MCF 10A (cell line): ENCODE measurements at regions of chr1 and their contacts with region 1.

Region 1: DNA sequence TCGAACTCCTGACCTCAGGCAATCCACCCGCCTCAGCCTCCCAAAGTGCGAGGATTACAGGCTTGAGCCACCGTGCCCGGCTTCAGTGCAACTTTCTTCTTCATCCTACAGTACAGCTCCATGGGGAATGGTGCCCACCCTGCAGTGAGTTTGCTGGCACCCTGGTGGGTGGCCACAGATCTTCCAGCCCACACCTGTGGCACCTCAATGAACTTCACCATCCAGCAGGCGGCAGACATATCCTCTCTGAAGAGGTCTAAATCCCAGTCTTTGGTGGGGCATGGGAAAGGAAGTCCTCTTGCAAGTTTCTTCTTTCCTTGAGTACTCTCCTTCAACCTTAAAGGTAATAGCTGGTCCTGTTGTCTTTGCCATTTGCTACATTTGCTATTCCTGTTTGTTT is 18.1 kb upstream of the ZBTB8A start:
- DNase-seq: no peak
- H3K4me3 Mint-ChIP-seq: peak overlapping the region; percentile 66
- H3K27ac Mint-ChIP-seq: no peak overlapping the region
- H3K4me1 Mint-ChIP-seq: peaks cover 5% of the 10 kb centered on the region
- H3K27me3 Mint-ChIP-seq: no peaks in the 10 kb centered on the region
- CTCF ChIP-seq: no peak

Region 2: GRCh38 chr1:32400876-32401631 is 120.1 kb before region 1 on chr1:
- CTCF ChIA-PET with region 1: interaction called, 16 read pairs
- POLR2A ChIA-PET with region 1: no interaction called
- intact Hi-C with region 1: no loop called
- DNase-seq: peak; percentile 90
- H3K4me3 Mint-ChIP-seq: no peak overlapping the region
- H3K27ac Mint-ChIP-seq: peak overlapping the region; percentile 67
- H3K4me1 Mint-ChIP-seq: peaks cover 6% of the 10 kb centered on the region
- H3K27me3 Mint-ChIP-seq: no peaks in the 10 kb centered on the region
- CTCF ChIP-seq: peak; percentile 86

Region 3: DNA sequence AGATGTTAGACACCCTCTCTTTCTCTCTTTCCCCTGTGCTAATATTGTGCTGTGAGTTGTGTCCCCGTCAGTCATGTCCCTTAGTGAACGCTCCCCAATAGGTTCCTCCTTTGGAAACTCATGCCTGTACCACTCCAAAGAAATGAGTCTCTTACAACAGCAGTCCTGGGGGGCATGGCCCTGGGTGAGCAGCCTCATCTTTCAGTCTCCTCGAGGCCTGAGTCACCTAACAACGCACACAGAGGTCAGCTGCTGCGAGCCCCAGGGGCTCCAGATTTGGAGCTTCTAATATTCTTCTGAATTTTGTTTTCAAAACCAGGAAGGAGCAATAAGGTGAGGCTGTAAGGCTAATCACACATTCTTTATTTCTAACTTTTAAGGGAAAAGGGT is 12.4 kb before region 1 on chr1:
- CTCF ChIA-PET with region 1: interaction called, 21 read pairs
- POLR2A ChIA-PET with region 1: no interaction called
- intact Hi-C with region 1: no loop called
- DNase-seq: no peak
- H3K4me3 Mint-ChIP-seq: no peak overlapping the region
- H3K27ac Mint-ChIP-seq: no peak overlapping the region
- H3K4me1 Mint-ChIP-seq: no peaks in the 10 kb centered on the region
- H3K27me3 Mint-ChIP-seq: no peaks in the 10 kb centered on the region
- CTCF ChIP-seq: no peak

Region 4: DNA sequence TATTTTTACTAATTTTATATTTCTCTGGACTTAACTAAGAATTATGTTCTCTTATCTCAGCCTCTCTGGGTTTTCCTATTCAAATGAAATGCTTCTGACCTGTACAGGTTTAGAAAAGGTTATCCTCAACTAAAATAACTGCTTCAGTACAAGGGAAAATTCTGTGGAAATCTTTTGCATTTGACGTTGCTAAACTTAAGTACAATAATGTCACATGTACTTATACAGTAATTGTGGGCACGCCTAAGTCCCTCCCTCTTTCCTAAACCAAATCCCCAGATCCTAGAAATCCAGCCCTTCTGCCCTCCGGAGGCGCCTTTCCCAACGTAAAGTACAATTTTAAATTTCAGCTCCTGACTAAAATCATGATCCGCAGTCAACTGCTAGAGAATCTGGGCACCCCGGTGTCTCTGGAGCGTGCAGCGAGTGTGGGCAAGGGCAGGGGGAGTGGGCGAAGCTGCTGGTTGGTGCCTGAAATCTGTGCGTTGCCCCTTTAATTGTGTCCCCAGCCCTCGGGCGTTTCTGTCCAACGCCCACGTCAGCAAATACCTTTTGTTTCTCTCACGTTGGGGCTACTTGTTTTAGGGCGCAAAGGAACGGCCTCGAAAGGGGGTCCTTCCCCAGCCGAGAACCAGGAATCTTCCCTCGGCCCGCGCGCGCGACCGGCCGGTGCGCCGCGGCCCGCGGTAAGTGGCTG is 17.9 kb after region 1 on chr1 and contains the start of gene ZBTB8A:
- CTCF ChIA-PET with region 1: interaction called, 16 read pairs
- POLR2A ChIA-PET with region 1: interaction called, 5 read pairs
- intact Hi-C with region 1: no loop called
- DNase-seq: peak; percentile 71
- H3K4me3 Mint-ChIP-seq: peak within 1 kb of the TSS; percentile 82
- H3K27ac Mint-ChIP-seq: peak within 1 kb of the TSS; percentile 87
- H3K4me1 Mint-ChIP-seq: peaks cover 18% of the 10 kb centered on the region
- H3K27me3 Mint-ChIP-seq: no peaks in the 10 kb centered on the region
- CTCF ChIP-seq: no peak
- total RNA-seq, gene ZBTB8A: 11.5 and 15.1 TPM in 2 replicates

Region 5: GRCh38 chr1:32870615-32871363 is 349.6 kb after region 1 on chr1 and contains the start of gene FNDC5:
- CTCF ChIA-PET with region 1: interaction called, 4 read pairs
- POLR2A ChIA-PET with region 1: no interaction called
- intact Hi-C with region 1: loop called (anchors 2 kb)
- DNase-seq: no peak
- H3K4me3 Mint-ChIP-seq: peak within 1 kb of the TSS; percentile 61
- H3K27ac Mint-ChIP-seq: no peak within 1 kb of the TSS
- H3K4me1 Mint-ChIP-seq: peaks cover 5% of the 10 kb centered on the region
- H3K27me3 Mint-ChIP-seq: peaks cover 12% of the 10 kb centered on the region
- CTCF ChIP-seq: no peak
- total RNA-seq, gene FNDC5: not detected in 2 replicates